ENCODE measurements at regions of chr12 and their contacts with region 1.

Region 1: DNA sequence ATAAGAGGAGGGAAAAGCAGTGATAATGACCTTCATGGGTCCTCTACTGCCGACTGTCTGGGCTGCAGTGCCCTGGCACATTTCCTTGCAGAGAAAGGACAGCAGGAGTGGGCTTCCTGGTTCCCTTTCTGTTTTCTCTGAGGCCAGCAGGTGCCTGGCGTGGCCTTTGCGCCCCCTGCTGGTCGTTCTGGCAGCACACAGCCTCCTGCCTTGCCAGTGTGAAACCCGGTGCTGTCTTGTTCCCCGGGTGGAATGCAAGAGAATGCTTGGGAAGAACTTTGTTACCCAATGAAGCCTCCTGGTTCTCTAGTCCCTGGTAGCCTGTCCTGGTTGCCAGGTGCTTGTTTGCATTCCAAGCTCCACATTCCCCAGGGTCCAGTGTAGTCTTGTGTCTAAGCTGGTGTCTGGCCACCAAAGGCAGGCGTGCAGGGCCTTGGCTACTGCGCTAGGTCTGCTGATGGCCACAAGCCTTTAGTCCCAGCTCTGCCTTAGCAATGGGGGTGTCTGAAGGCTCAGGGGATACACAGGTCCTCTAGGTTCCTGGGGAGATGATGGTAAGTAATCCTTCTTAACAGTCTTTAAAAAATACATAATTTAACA is 1392.4 kb upstream of the TMEM132C start:
- DNase-seq: peak; percentile 46
- H3K4me3 ChIP-seq: no peak overlapping the region
- H3K27ac ChIP-seq: no peak overlapping the region
- H3K4me1 ChIP-seq: no peaks in the 10 kb centered on the region
- H3K27me3 ChIP-seq: no peaks in the 10 kb centered on the region
- CTCF ChIP-seq: peak; percentile 90

Region 2: GRCh38 chr12:126069549-126070165 is 804.9 kb before region 1 on chr12:
- intact Hi-C with region 1: loop called (anchors 5 kb)
- DNase-seq: peak; percentile 57
- H3K4me3 ChIP-seq: no peak overlapping the region
- H3K27ac ChIP-seq: no peak overlapping the region
- H3K4me1 ChIP-seq: no peaks in the 10 kb centered on the region
- H3K27me3 ChIP-seq: no peaks in the 10 kb centered on the region
- CTCF ChIP-seq: peak; percentile 58

Region 3: GRCh38 chr12:126156806-126157574 is 717.5 kb before region 1 on chr12:
- intact Hi-C with region 1: no loop called
- DNase-seq: no peak
- H3K4me3 ChIP-seq: no peak overlapping the region
- H3K27ac ChIP-seq: no peak overlapping the region
- H3K4me1 ChIP-seq: no peaks in the 10 kb centered on the region
- H3K27me3 ChIP-seq: no peaks in the 10 kb centered on the region
- CTCF ChIP-seq: no peak

Measured in colonic mucosa (tissue), 4 donors.